Calu3 (cell line): ENCODE measurements at regions of chr7 and their contacts with region 1.

Region 1: GRCh38 chr7:43260980-43261878 is 148.8 kb downstream of the HECW1 start:
- DNase-seq: peak; percentile 86
- H3K4me3 Mint-ChIP-seq: no peak overlapping the region
- H3K27ac Mint-ChIP-seq: no peak overlapping the region
- H3K4me1 Mint-ChIP-seq: no peaks in the 10 kb centered on the region
- H3K27me3 Mint-ChIP-seq: no peaks in the 10 kb centered on the region
- CTCF ChIP-seq: peak; percentile 95

Region 2: GRCh38 chr7:41940760-41941343 is 1320.4 kb before region 1 on chr7:
- CTCF ChIA-PET with region 1: no interaction called
- intact Hi-C with region 1: loop called (anchors 5 kb)
- DNase-seq: peak; percentile 79
- H3K4me3 Mint-ChIP-seq: no peak overlapping the region
- H3K27ac Mint-ChIP-seq: no peak overlapping the region
- H3K4me1 Mint-ChIP-seq: peaks cover 16% of the 10 kb centered on the region
- H3K27me3 Mint-ChIP-seq: peaks cover 91% of the 10 kb centered on the region
- CTCF ChIP-seq: peak; percentile 94

Region 3: GRCh38 chr7:43211276-43211675 is 50.0 kb before region 1 on chr7:
- CTCF ChIA-PET with region 1: interaction called, 7 read pairs
- intact Hi-C with region 1: loop called (anchors 5 kb)
- DNase-seq: peak; percentile 36
- H3K4me3 Mint-ChIP-seq: no peak overlapping the region
- H3K27ac Mint-ChIP-seq: no peak overlapping the region
- H3K4me1 Mint-ChIP-seq: no peaks in the 10 kb centered on the region
- H3K27me3 Mint-ChIP-seq: peaks cover 42% of the 10 kb centered on the region
- CTCF ChIP-seq: no peak

Region 4: GRCh38 chr7:43454936-43455518 is 193.8 kb after region 1 on chr7:
- CTCF ChIA-PET with region 1: interaction called, 5 read pairs
- intact Hi-C with region 1: loop called (anchors 10 kb)
- DNase-seq: peak; percentile 25
- H3K4me3 Mint-ChIP-seq: no peak overlapping the region
- H3K27ac Mint-ChIP-seq: no peak overlapping the region
- H3K4me1 Mint-ChIP-seq: peaks cover 10% of the 10 kb centered on the region
- H3K27me3 Mint-ChIP-seq: no peaks in the 10 kb centered on the region
- CTCF ChIP-seq: peak; percentile 66

Region 5: GRCh38 chr7:43729214-43729923 is 468.1 kb after region 1 on chr7 and contains the start of gene COA1:
- CTCF ChIA-PET with region 1: no interaction called
- intact Hi-C with region 1: loop called (anchors 10 kb)
- DNase-seq: peak; percentile 90
- H3K4me3 Mint-ChIP-seq: peak within 1 kb of the TSS; percentile 91
- H3K27ac Mint-ChIP-seq: peak within 1 kb of the TSS; percentile 75
- H3K4me1 Mint-ChIP-seq: peaks cover 32% of the 10 kb centered on the region
- H3K27me3 Mint-ChIP-seq: no peaks in the 10 kb centered on the region
- CTCF ChIP-seq: no peak
- total RNA-seq, gene COA1: 101 and 109 TPM in 2 replicates

Region 6: GRCh38 chr7:43834463-43835251 is 573.4 kb after region 1 on chr7:
- CTCF ChIA-PET with region 1: no interaction called
- intact Hi-C with region 1: loop called (anchors 10 kb)
- DNase-seq: no peak
- H3K4me3 Mint-ChIP-seq: peak overlapping the region; percentile 15
- H3K27ac Mint-ChIP-seq: peak overlapping the region; percentile 40
- H3K4me1 Mint-ChIP-seq: peaks cover 27% of the 10 kb centered on the region
- H3K27me3 Mint-ChIP-seq: no peaks in the 10 kb centered on the region
- CTCF ChIP-seq: no peak